Mammary epithelial cell (primary cell): ENCODE measurements at regions of chrX and their contacts with region 1.

Region 1: GRCh38 chrX:68196939-68197791 is 236.1 kb downstream of the OPHN1 start:
- DNase-seq: peak; percentile 57
- H3K4me3 ChIP-seq: no peak overlapping the region
- H3K27ac ChIP-seq: no peak overlapping the region
- H3K4me1 ChIP-seq: no peaks in the 10 kb centered on the region
- H3K27me3 ChIP-seq: no peaks in the 10 kb centered on the region
- CTCF ChIP-seq: peak; percentile 76 to 86

Region 2: DNA sequence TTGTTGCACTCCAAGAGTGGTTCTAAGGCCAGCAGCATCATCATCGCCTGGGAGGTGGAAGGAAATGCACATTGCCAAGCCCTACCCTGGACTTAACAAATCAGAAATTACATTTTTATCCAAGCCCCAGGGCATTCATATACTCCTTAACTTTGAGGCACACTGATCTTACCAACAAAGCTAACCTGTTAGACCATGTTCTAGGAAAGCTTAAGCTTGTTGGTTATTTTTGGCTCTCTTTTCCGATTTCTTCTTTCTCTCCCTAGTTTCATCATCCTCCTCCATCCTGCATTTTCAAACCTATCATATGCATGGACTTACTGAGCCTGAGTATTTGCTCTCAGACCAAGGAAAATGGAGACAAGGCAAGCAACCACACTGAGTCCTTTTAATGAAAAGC is 102.7 kb after region 1 on chrX:
- CTCF ChIA-PET with region 1: no interaction called
- dilution Hi-C with region 1: no loop called
- in situ Hi-C with region 1: no loop called
- intact Hi-C with region 1: no loop called
- DNase-seq: no peak
- H3K4me3 ChIP-seq: no peak overlapping the region
- H3K27ac ChIP-seq: no peak overlapping the region
- H3K4me1 ChIP-seq: no peaks in the 10 kb centered on the region
- H3K27me3 ChIP-seq: no peaks in the 10 kb centered on the region
- CTCF ChIP-seq: no peak

Region 3: GRCh38 chrX:68490599-68490998 is 293.4 kb after region 1 on chrX:
- CTCF ChIA-PET with region 1: interaction called, 14 read pairs
- dilution Hi-C with region 1: no loop called
- in situ Hi-C with region 1: loop called in 1 of 2 experiments (anchors 10 kb)
- intact Hi-C with region 1: loop called (anchors 1 kb)
- DNase-seq: peak; percentile 30
- H3K4me3 ChIP-seq: no peak overlapping the region
- H3K27ac ChIP-seq: no peak overlapping the region
- H3K4me1 ChIP-seq: no peaks in the 10 kb centered on the region
- H3K27me3 ChIP-seq: no peaks in the 10 kb centered on the region
- CTCF ChIP-seq: peak; percentile 47 to 49

Region 4: DNA sequence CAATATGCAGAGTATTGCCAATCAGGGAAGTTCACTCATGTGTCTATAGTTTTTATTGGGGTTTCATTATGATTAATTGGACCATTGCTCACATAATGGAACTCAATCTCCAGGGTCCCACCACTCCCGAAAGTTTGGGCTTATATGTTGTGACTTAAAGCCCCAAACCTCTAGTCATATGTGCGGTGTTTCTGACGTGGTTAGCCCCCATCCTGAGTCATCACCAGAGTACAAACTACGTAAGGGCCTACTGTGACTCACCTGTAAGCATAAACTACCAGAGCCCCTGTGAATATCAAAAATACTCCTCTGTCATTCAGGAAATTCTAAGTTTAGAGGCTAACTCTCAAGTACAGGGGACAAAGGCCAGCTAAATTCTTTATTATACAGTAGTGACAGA is 307.1 kb after region 1 on chrX:
- CTCF ChIA-PET with region 1: no interaction called
- dilution Hi-C with region 1: no loop called
- in situ Hi-C with region 1: loop called (anchors 10 kb)
- intact Hi-C with region 1: loop called (anchors 2 kb)
- DNase-seq: peak; percentile 68
- H3K4me3 ChIP-seq: no peak overlapping the region
- H3K27ac ChIP-seq: peak overlapping the region; percentile 71
- H3K4me1 ChIP-seq: peaks cover 16% of the 10 kb centered on the region
- H3K27me3 ChIP-seq: no peaks in the 10 kb centered on the region
- CTCF ChIP-seq: no peak

Region 5: GRCh38 chrX:68710870-68711576 is 513.9 kb after region 1 on chrX:
- CTCF ChIA-PET with region 1: interaction called, 3 read pairs
- dilution Hi-C with region 1: no loop called
- in situ Hi-C with region 1: loop called (anchors 10 to 25 kb)
- intact Hi-C with region 1: loop called (anchors 1 kb)
- DNase-seq: peak; percentile 25
- H3K4me3 ChIP-seq: no peak overlapping the region
- H3K27ac ChIP-seq: no peak overlapping the region
- H3K4me1 ChIP-seq: no peaks in the 10 kb centered on the region
- H3K27me3 ChIP-seq: no peaks in the 10 kb centered on the region
- CTCF ChIP-seq: peak; percentile 61 to 75